ENCODE measurements at regions of chr1 and their contacts with region 1.

Region 1: GRCh38 chr1:161172776-161173376 is 4.4 kb downstream of the B4GALT3 start:
- DNase-seq: no peak
- ATAC-seq: no peak
- H3K4me3 ChIP-seq: no peak overlapping the region
- H3K27ac ChIP-seq: no peak overlapping the region
- H3K4me1 ChIP-seq: peaks cover 16% of the 10 kb centered on the region
- H3K27me3 ChIP-seq: no peaks in the 10 kb centered on the region
- CTCF ChIP-seq: no peak

Region 2: GRCh38 chr1:161185282-161185682 is 12.4 kb after region 1 on chr1:
- CTCF ChIA-PET with region 1: no interaction called
- POLR2A ChIA-PET with region 1: interaction called, 12 read pairs
- intact Hi-C with region 1: no loop called
- DNase-seq: no peak
- ATAC-seq: no peak
- H3K4me3 ChIP-seq: no peak overlapping the region
- H3K27ac ChIP-seq: no peak overlapping the region
- H3K4me1 ChIP-seq: peaks cover 15% of the 10 kb centered on the region
- H3K27me3 ChIP-seq: no peaks in the 10 kb centered on the region
- CTCF ChIP-seq: no peak

Region 3: DNA sequence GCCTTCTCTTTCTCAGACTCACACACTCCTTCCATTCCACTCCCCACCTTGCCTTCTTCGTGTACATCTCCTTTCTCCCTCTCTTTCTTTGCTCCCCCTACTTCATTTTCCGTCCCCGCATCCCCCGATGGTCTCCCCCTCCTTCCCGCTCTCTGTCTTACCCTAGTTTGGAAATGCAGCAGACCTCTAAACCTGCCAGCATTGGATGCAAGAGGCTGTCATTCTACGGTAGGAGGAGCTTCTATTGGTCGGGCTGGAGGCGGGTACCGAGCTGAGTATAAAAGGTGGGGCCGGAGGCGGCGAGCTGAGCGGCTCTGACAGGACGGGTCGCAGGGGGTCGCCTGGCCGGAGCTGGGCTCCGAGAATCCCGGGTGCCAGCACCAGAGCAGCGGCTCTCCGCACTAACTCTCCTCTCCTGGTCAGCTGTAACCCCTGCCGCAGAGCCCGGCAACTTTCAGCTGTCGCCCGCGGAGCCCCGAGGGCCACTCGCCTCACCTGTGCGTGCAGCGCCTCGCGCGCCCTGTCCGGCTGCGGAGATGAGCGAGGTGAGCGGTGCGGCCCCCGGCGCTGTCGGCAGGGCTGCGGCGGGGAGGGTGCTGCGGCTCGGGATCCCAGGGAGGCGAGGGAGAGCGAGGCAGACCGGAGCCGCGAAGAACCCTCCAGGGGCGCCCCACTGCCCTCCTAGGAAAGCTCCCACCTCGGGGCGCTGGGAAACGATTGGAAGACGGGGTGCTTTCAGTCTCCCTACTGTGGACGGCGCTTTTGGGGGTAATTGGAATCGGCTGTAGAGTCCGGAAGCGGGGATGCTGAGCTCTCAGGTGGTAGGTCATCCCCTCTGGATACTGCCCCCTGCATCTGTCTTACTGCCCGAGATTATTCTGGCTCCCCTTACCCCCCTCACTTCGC is 85.8 kb after region 1 on chr1 and contains the start of gene PCP4L1:
- CTCF ChIA-PET with region 1: no interaction called
- POLR2A ChIA-PET with region 1: no interaction called
- intact Hi-C with region 1: no loop called
- DNase-seq: peak; percentile 40
- ATAC-seq: peak; percentile 82
- H3K4me3 ChIP-seq: peak within 1 kb of the TSS; percentile 57
- H3K27ac ChIP-seq: no peak within 1 kb of the TSS
- H3K4me1 ChIP-seq: no peaks in the 10 kb centered on the region
- H3K27me3 ChIP-seq: peaks cover 27% of the 10 kb centered on the region
- CTCF ChIP-seq: no peak
- total RNA-seq, gene PCP4L1: 0.07 TPM in 1 of 2 replicates, not detected in the other

Measured in PC-3 (cell line).